CD4-positive, alpha-beta memory T cell (primary cell): ENCODE measurements at regions of chr14 and their contacts with region 1.

Region 1: DNA sequence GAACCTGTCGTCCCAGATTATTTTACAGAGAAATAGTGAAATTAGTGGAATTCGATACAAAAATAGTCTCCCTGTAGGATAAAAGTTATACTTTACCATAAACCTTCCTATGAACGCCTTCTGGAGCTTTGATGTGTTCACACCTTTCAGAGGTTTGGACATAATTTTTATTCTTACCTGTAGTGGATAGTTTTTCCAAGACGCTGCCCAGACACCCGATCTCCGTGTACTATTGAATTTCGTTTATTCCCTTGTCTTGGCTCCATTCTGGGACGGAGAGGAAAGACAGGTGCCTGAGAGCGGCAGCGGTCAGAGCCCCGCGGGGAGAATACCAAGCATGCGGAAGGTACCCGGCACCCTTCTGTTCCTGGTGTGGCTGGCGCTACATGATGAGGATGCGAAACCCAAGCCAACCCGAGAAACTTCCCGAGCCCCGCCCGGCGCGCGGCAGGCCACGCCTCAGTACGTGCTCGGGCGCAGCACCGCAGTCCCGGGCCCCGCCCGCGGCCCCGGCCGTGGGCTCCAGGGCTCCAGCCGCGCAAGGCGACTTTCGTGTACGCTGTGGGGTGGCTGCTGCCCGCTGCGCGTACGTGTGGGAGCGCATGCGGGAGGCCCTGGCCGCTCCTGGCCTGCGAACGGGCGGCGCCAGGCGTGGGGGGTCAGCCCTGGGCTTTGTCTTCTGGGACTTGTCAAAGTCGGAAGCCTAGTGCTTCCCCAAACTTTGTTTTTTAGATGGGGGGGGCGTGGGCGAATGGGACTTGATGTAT is 11.3 kb upstream of the SNAPC1 start:
- DNase-seq: peak; percentile 70 to 77 (median 72)
- H3K4me3 ChIP-seq: peak overlapping the region; percentile 39 to 59
- H3K4me3 Mint-ChIP-seq: peak overlapping the region; percentile 84 to 93 (median 88)
- H3K27ac ChIP-seq: peak overlapping the region; percentile 50
- H3K27ac Mint-ChIP-seq: peak overlapping the region in 6 of 7 donors; percentile 72 to 96 (median 90)
- H3K4me1 ChIP-seq: peaks cover 11% of the 10 kb centered on the region
- H3K4me1 Mint-ChIP-seq: peaks cover 3 to 19% (median 4%) of the 10 kb centered on the region in 4 donors
- H3K27me3 ChIP-seq: no peaks in the 10 kb centered on the region
- H3K27me3 Mint-ChIP-seq: peaks cover 0 to 1% of the 10 kb centered on the region in 2 donors

Region 2: GRCh38 chr14:61761959-61762786 is 11.3 kb after region 1 on chr14 and contains the start of gene SNAPC1:
- CTCF ChIA-PET with region 1: interaction called, 10 read pairs
- POLR2A ChIA-PET with region 1: interaction called, 23 read pairs
- intact Hi-C with region 1: loop called (anchors 1 kb)
- DNase-seq: peak; percentile 96 to 98 (median 97)
- H3K4me3 ChIP-seq: peak within 1 kb of the TSS; percentile 80 to 85
- H3K4me3 Mint-ChIP-seq: peak within 1 kb of the TSS; percentile 96 to 100 (median 99)
- H3K27ac ChIP-seq: peak within 1 kb of the TSS; percentile 90
- H3K27ac Mint-ChIP-seq: peak within 1 kb of the TSS; percentile 99 to 100 (median 100)
- H3K4me1 ChIP-seq: peaks cover 38% of the 10 kb centered on the region
- H3K4me1 Mint-ChIP-seq: peaks cover 25 to 54% (median 31%) of the 10 kb centered on the region in 4 donors
- H3K27me3 ChIP-seq: no peaks in the 10 kb centered on the region
- H3K27me3 Mint-ChIP-seq: no peaks in the 10 kb centered on the region
- total RNA-seq, gene SNAPC1: 4.0 to 4.2 TPM

Region 3: DNA sequence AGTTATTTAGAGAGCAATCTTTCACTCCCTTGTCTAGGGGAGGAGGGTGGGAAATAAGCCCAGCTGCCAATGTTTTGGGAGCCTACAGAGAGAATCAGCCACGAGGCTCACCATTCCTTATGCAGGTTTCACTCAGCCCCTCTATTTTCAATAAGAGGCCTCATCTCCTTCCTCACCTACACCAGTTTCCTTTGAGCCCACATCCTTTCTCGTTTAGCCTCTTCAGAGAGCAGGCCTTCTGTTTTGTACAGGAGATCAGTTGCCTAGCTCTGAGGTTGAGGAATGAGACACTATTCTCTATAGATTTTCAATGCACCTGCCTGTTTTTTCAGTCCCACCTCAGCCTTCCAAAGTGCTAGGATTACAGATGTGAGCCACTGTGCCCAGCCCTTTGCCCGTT is 29.2 kb after region 1 on chr14:
- CTCF ChIA-PET with region 1: no interaction called
- POLR2A ChIA-PET with region 1: no interaction called
- intact Hi-C with region 1: loop called (anchors 5 kb)
- DNase-seq: peak in 4 of 5 donors; percentile 12 to 26 (median 23)
- H3K4me3 ChIP-seq: no peak overlapping the region
- H3K4me3 Mint-ChIP-seq: peak overlapping the region in 7 of 8 donors; percentile 27 to 81 (median 53)
- H3K27ac ChIP-seq: no peak overlapping the region
- H3K27ac Mint-ChIP-seq: peak overlapping the region; percentile 57 to 91 (median 85)
- H3K4me1 ChIP-seq: peaks cover 21% of the 10 kb centered on the region
- H3K4me1 Mint-ChIP-seq: peaks cover 16 to 30% (median 20%) of the 10 kb centered on the region in 4 donors
- H3K27me3 ChIP-seq: no peaks in the 10 kb centered on the region
- H3K27me3 Mint-ChIP-seq: no peaks in the 10 kb centered on the region